T-cell (primary cell): ENCODE measurements at regions of chr4 and their contacts with region 1.

Region 1: GRCh38 chr4:74670583-74670982 is 123.7 kb downstream of the BTC start:
- DNase-seq: no peak
- ATAC-seq: no peak
- H3K4me3 ChIP-seq: no peak overlapping the region
- H3K4me3 Mint-ChIP-seq: no peak overlapping the region
- H3K27ac ChIP-seq: no peak overlapping the region
- H3K27ac Mint-ChIP-seq: no peak overlapping the region
- H3K4me1 ChIP-seq: no peaks in the 10 kb centered on the region
- H3K4me1 Mint-ChIP-seq: peaks cover 1 to 3% (median 1%) of the 10 kb centered on the region in 3 donors
- H3K27me3 ChIP-seq: no peaks in the 10 kb centered on the region
- H3K27me3 Mint-ChIP-seq: peaks cover 0 to 9% of the 10 kb centered on the region in 2 donors

Region 2: DNA sequence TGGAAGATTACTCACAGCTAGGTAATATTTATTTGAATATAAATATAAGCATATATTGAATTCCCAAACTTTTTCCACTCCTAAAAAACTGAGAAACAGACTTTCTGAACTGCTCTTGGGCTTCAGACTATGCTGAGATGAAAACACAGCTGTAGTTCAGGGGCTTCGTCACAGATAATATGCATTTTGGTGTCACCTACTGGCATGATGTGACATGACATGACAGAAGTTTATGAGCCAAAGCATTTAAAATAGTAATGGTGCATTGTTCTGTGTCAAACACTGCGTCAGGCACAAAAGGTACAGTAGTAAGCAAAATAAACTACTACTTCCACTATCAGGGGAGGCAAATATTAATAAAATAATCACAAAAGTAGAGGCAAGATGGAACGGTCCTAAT is 47.5 kb before region 1 on chr4:
- CTCF ChIA-PET with region 1: interaction called, 6 to 10 read pairs
- POLR2A ChIA-PET with region 1: no interaction called
- DNase-seq: peak in 8 of 35 experiments; percentile 0 to 51 (median 4)
- ATAC-seq: peak in 3 of 4 experiments; percentile 35 to 69 (median 53)
- H3K4me3 ChIP-seq: no peak overlapping the region
- H3K4me3 Mint-ChIP-seq: no peak overlapping the region
- H3K27ac ChIP-seq: no peak overlapping the region
- H3K27ac Mint-ChIP-seq: no peak overlapping the region
- H3K4me1 ChIP-seq: peaks cover 0 to 14% of the 10 kb centered on the region in 2 experiments
- H3K4me1 Mint-ChIP-seq: peaks cover 22 to 35% (median 23%) of the 10 kb centered on the region in 3 donors
- H3K27me3 ChIP-seq: no peaks in the 10 kb centered on the region
- H3K27me3 Mint-ChIP-seq: peaks cover 0 to 3% of the 10 kb centered on the region in 2 donors